ENCODE measurements at regions of chr1 and their contacts with region 1.

Region 1: DNA sequence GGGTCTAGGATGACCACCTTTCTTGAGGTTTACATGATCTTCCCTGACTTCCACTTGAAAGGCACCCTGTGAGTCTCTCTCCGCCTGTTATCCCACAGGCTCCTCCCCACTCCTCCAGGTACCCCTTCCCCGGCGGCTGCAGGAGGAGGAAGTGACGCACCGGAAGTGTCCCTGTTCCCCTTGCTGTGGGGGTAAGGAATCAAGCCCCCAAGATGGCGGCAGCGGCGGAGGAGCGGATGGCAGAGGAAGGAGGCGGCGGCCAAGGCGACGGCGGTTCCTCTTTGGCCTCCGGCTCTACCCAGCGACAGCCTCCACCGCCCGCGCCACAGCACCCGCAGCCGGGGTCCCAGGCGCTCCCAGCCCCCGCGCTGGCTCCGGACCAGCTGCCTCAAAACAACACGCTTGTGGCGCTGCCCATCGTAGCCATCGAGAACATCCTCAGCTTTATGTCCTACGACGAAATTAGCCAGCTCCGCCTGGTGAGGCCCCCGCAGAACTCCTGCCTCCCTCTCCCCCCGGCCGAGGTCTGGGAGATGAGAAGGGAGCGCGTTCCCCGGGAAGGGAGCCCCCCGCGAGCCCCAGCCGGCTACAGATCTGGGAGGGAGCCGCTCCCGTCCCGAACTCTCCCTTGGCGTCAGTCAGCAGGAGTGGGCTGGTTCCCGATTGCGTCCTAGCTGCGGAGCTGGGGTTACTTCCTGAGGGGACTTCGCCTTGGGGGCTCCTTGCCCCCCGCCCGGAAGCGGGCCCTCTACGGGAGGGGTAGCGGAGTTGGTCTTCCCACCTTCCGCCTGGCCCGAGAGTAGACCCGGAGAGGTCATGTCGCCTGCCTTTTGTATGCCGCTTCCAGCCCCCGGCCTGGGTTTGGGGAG is at the start of gene FBXO28:
- DNase-seq: peak; percentile 90
- H3K4me3 Mint-ChIP-seq: peak within 1 kb of the TSS; percentile 80
- H3K27ac Mint-ChIP-seq: peak within 1 kb of the TSS; percentile 79
- H3K4me1 Mint-ChIP-seq: peaks cover 25% of the 10 kb centered on the region
- H3K27me3 Mint-ChIP-seq: peaks cover 17% of the 10 kb centered on the region
- total RNA-seq, gene FBXO28: 22.9 and 24.3 TPM in 2 replicates

Region 2: GRCh38 chr1:224457782-224458144 is 343.6 kb after region 1 on chr1:
- intact Hi-C with region 1: loop called (anchors 1 kb)
- DNase-seq: no peak
- H3K4me3 Mint-ChIP-seq: no peak overlapping the region
- H3K27ac Mint-ChIP-seq: no peak overlapping the region
- H3K4me1 Mint-ChIP-seq: peaks cover 23% of the 10 kb centered on the region
- H3K27me3 Mint-ChIP-seq: no peaks in the 10 kb centered on the region

Measured in activated T-helper 2 cell treated with anti-CD3 and anti-CD28 coated beads, Interferon-gamma antibody, Interleukin-2, Interleukin-4, amounts not matched to agents 10 μg/mL and 5 μg/mL and 100 μg/mL, durations not matched to agents 14 hours and 24 hours and 36 hours (primary cell).